ENCODE measurements at regions of chr1 and their contacts with region 1.

Region 1: GRCh38 chr1:27154991-27155781 is at the start of gene SLC9A1:
- DNase-seq: peak; percentile 97
- ATAC-seq: peak; percentile 95
- H3K4me3 ChIP-seq: peak within 1 kb of the TSS; percentile 62 to 87 (median 78)
- H3K4me3 Mint-ChIP-seq: peak within 1 kb of the TSS; percentile 89
- H3K27ac ChIP-seq: peak within 1 kb of the TSS; percentile 99
- H3K27ac Mint-ChIP-seq: peak within 1 kb of the TSS; percentile 98
- H3K4me1 ChIP-seq: peaks cover 25 to 45% of the 10 kb centered on the region in 2 donors
- H3K4me1 Mint-ChIP-seq: peaks cover 48% of the 10 kb centered on the region
- H3K27me3 ChIP-seq: no peaks in the 10 kb centered on the region
- H3K27me3 Mint-ChIP-seq: no peaks in the 10 kb centered on the region
- CTCF ChIP-seq: peak; percentile 81
- total RNA-seq, gene SLC9A1: 18.3 and 22.5 TPM in 2 replicates

Region 2: GRCh38 chr1:26066857-26067256 is 1088.3 kb before region 1 on chr1:
- CTCF ChIA-PET with region 1: no interaction called
- POLR2A ChIA-PET with region 1: no interaction called
- intact Hi-C with region 1: no loop called
- DNase-seq: no peak
- ATAC-seq: no peak
- H3K4me3 ChIP-seq: no peak overlapping the region
- H3K4me3 Mint-ChIP-seq: no peak overlapping the region
- H3K27ac ChIP-seq: no peak overlapping the region
- H3K27ac Mint-ChIP-seq: no peak overlapping the region
- H3K4me1 ChIP-seq: no peaks in the 10 kb centered on the region
- H3K4me1 Mint-ChIP-seq: no peaks in the 10 kb centered on the region
- H3K27me3 ChIP-seq: no peaks in the 10 kb centered on the region
- H3K27me3 Mint-ChIP-seq: peaks cover 27% of the 10 kb centered on the region
- CTCF ChIP-seq: no peak

Region 3: GRCh38 chr1:27037515-27037914 is 117.7 kb before region 1 on chr1:
- CTCF ChIA-PET with region 1: no interaction called
- POLR2A ChIA-PET with region 1: no interaction called
- intact Hi-C with region 1: no loop called
- DNase-seq: no peak
- ATAC-seq: no peak
- H3K4me3 ChIP-seq: no peak overlapping the region
- H3K4me3 Mint-ChIP-seq: no peak overlapping the region
- H3K27ac ChIP-seq: no peak overlapping the region
- H3K27ac Mint-ChIP-seq: no peak overlapping the region
- H3K4me1 ChIP-seq: no peaks in the 10 kb centered on the region
- H3K4me1 Mint-ChIP-seq: no peaks in the 10 kb centered on the region
- H3K27me3 ChIP-seq: peaks cover 0 to 6% (median 0%) of the 10 kb centered on the region in 4 experiments
- H3K27me3 Mint-ChIP-seq: peaks cover 6% of the 10 kb centered on the region
- CTCF ChIP-seq: no peak

Region 4: GRCh38 chr1:27102707-27103491 is 52.3 kb before region 1 on chr1:
- CTCF ChIA-PET with region 1: interaction called, 8 read pairs
- POLR2A ChIA-PET with region 1: interaction called, 3 read pairs
- intact Hi-C with region 1: loop called (anchors 2 kb)
- DNase-seq: peak; percentile 85
- ATAC-seq: peak; percentile 46
- H3K4me3 ChIP-seq: no peak overlapping the region
- H3K4me3 Mint-ChIP-seq: no peak overlapping the region
- H3K27ac ChIP-seq: no peak overlapping the region
- H3K27ac Mint-ChIP-seq: peak overlapping the region; percentile 77
- H3K4me1 ChIP-seq: peaks cover 24 to 41% of the 10 kb centered on the region in 2 donors
- H3K4me1 Mint-ChIP-seq: peaks cover 37% of the 10 kb centered on the region
- H3K27me3 ChIP-seq: no peaks in the 10 kb centered on the region
- H3K27me3 Mint-ChIP-seq: no peaks in the 10 kb centered on the region
- CTCF ChIP-seq: peak; percentile 92

Region 5: GRCh38 chr1:27136998-27137542 is 18.1 kb before region 1 on chr1:
- CTCF ChIA-PET with region 1: interaction called, 11 read pairs
- POLR2A ChIA-PET with region 1: interaction called, 5 read pairs
- intact Hi-C with region 1: loop called (anchors 2 kb)
- DNase-seq: peak; percentile 64
- ATAC-seq: peak; percentile 77
- H3K4me3 ChIP-seq: peak overlapping the region in 2 of 5 experiments; percentile 2 to 9
- H3K4me3 Mint-ChIP-seq: peak overlapping the region; percentile 76
- H3K27ac ChIP-seq: peak overlapping the region; percentile 56 to 75
- H3K27ac Mint-ChIP-seq: peak overlapping the region; percentile 97
- H3K4me1 ChIP-seq: peaks cover 29 to 45% of the 10 kb centered on the region in 2 donors
- H3K4me1 Mint-ChIP-seq: peaks cover 59% of the 10 kb centered on the region
- H3K27me3 ChIP-seq: no peaks in the 10 kb centered on the region
- H3K27me3 Mint-ChIP-seq: no peaks in the 10 kb centered on the region
- CTCF ChIP-seq: no peak

Region 6: GRCh38 chr1:27234049-27234882 is 79.1 kb after region 1 on chr1 and contains the start of gene WDTC1:
- CTCF ChIA-PET with region 1: no interaction called
- POLR2A ChIA-PET with region 1: interaction called, 4 read pairs
- intact Hi-C with region 1: loop called (anchors 1 kb)
- DNase-seq: peak; percentile 99
- ATAC-seq: peak; percentile 90
- H3K4me3 ChIP-seq: peak within 1 kb of the TSS; percentile 58 to 77 (median 75)
- H3K4me3 Mint-ChIP-seq: peak within 1 kb of the TSS; percentile 97
- H3K27ac ChIP-seq: peak within 1 kb of the TSS; percentile 38 to 83
- H3K27ac Mint-ChIP-seq: peak within 1 kb of the TSS; percentile 98
- H3K4me1 ChIP-seq: peaks cover 18 to 26% of the 10 kb centered on the region in 2 donors
- H3K4me1 Mint-ChIP-seq: peaks cover 33% of the 10 kb centered on the region
- H3K27me3 ChIP-seq: no peaks in the 10 kb centered on the region
- H3K27me3 Mint-ChIP-seq: no peaks in the 10 kb centered on the region
- CTCF ChIP-seq: no peak
- total RNA-seq, gene WDTC1: 69.1 and 70.9 TPM in 2 replicates

Region 7: GRCh38 chr1:27321813-27322577 is 166.8 kb after region 1 on chr1 and contains the start of gene TMEM222:
- CTCF ChIA-PET with region 1: no interaction called
- POLR2A ChIA-PET with region 1: no interaction called
- intact Hi-C with region 1: loop called (anchors 1 kb)
- DNase-seq: peak; percentile 98
- ATAC-seq: peak; percentile 96
- H3K4me3 ChIP-seq: peak within 1 kb of the TSS; percentile 80 to 100 (median 98)
- H3K4me3 Mint-ChIP-seq: peak within 1 kb of the TSS; percentile 98
- H3K27ac ChIP-seq: peak within 1 kb of the TSS; percentile 94
- H3K27ac Mint-ChIP-seq: peak within 1 kb of the TSS; percentile 97
- H3K4me1 ChIP-seq: peaks cover 17 to 25% of the 10 kb centered on the region in 2 donors
- H3K4me1 Mint-ChIP-seq: peaks cover 51% of the 10 kb centered on the region
- H3K27me3 ChIP-seq: no peaks in the 10 kb centered on the region
- H3K27me3 Mint-ChIP-seq: peaks cover 12% of the 10 kb centered on the region
- CTCF ChIP-seq: no peak
- total RNA-seq, gene TMEM222: 44.2 and 48.7 TPM in 2 replicates

Region 8: GRCh38 chr1:27357281-27358037 is 202.3 kb after region 1 on chr1:
- CTCF ChIA-PET with region 1: no interaction called
- POLR2A ChIA-PET with region 1: no interaction called
- intact Hi-C with region 1: no loop called
- DNase-seq: peak; percentile 90
- ATAC-seq: peak; percentile 71
- H3K4me3 ChIP-seq: peak overlapping the region; percentile 21 to 63 (median 54)
- H3K4me3 Mint-ChIP-seq: peak overlapping the region; percentile 84
- H3K27ac ChIP-seq: peak overlapping the region; percentile 19 to 34
- H3K27ac Mint-ChIP-seq: peak overlapping the region; percentile 75
- H3K4me1 ChIP-seq: peaks cover 36 to 54% of the 10 kb centered on the region in 2 donors
- H3K4me1 Mint-ChIP-seq: peaks cover 48% of the 10 kb centered on the region
- H3K27me3 ChIP-seq: no peaks in the 10 kb centered on the region
- H3K27me3 Mint-ChIP-seq: no peaks in the 10 kb centered on the region
- CTCF ChIP-seq: peak; percentile 98